Activated CD8-positive, alpha-beta T cell treated with anti-CD3 and anti-CD28 coated beads, Interleukin-2, amount 10 ng/mL, durations not matched to agents 7 days and 5 days (primary cell): ENCODE measurements at regions of chr3 and their contacts with region 1.

Region 1: GRCh38 chr3:143674100-143674968 is 173.9 kb downstream of the SLC9A9 start:
- DNase-seq: peak; percentile 86
- ATAC-seq: peak; percentile 87
- H3K4me3 Mint-ChIP-seq: no peak overlapping the region
- H3K27ac Mint-ChIP-seq: peak overlapping the region; percentile 14
- H3K4me1 Mint-ChIP-seq: peaks cover 6% of the 10 kb centered on the region
- H3K27me3 Mint-ChIP-seq: no peaks in the 10 kb centered on the region

Region 2: DNA sequence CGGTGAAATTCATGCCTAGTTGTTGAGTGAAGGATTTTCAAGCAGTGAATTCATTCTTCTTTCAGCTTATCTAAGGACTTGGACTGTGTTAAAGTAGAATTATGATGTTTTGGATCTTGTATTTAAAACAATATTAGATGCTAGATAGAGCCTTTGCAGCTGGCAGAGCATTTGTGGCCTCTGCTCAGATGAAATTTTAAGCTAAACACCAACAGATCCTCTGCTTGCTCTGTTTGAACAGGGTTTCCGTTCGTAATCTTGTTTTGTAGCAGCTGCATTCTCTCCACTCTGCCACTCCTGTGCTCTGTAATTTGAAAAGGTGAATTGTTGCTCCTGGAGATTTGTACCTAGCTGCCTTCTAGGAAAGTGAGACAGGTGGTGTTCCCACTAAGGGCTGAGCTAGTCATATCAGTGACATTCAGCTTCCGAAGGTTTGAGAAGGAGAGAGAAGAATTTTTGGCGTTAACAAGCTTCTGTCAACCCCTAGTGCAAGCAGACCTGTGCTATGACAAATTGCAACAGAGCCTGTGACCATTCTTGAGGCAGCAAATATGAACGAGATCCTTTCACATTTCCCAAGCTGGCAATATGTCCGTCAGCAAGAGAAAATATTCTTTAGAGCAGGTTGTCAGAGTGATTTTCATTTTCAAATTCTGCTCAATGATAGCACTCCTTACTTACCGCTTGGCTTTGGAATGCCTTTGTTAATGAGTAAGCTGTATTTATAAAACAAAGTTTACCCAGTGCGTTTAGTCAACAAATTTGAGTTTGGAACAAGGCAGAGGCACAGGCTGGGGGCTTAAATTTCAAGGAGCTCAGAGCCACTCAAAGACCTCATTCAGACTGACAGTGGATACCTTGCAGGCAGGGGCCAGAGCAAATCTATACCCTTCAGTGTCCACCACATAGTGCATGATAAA is 549.5 kb before region 1 on chr3:
- CTCF ChIA-PET with region 1: interaction called, 37 read pairs
- POLR2A ChIA-PET with region 1: no interaction called
- DNase-seq: no peak
- ATAC-seq: no peak
- H3K4me3 Mint-ChIP-seq: no peak overlapping the region
- H3K27ac Mint-ChIP-seq: no peak overlapping the region
- H3K4me1 Mint-ChIP-seq: peaks cover 29% of the 10 kb centered on the region
- H3K27me3 Mint-ChIP-seq: no peaks in the 10 kb centered on the region

Region 3: GRCh38 chr3:143617051-143617450 is 57.3 kb before region 1 on chr3:
- CTCF ChIA-PET with region 1: no interaction called
- POLR2A ChIA-PET with region 1: no interaction called
- DNase-seq: no peak
- ATAC-seq: no peak
- H3K4me3 Mint-ChIP-seq: no peak overlapping the region
- H3K27ac Mint-ChIP-seq: no peak overlapping the region
- H3K4me1 Mint-ChIP-seq: no peaks in the 10 kb centered on the region
- H3K27me3 Mint-ChIP-seq: no peaks in the 10 kb centered on the region

Region 4: DNA sequence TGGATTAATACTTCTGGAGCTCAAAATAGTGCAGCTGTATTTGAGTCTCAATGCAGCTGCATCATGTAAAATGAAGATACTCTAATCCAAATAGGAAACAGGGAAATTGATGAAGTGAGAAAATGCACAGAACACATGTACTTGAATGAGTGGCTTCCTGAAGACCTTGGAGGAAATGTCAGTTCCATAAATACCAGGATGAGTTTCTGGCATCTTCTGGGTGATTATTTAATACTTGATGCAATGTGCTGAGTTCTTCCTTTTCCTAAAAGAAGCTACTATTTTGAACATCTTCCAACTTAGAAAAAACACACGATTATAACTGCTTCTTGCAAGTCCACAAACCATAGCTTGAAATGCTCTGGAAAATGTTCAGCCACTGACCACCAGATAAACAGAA is 11.2 kb after region 1 on chr3:
- CTCF ChIA-PET with region 1: interaction called, 13 read pairs
- POLR2A ChIA-PET with region 1: no interaction called
- DNase-seq: no peak
- ATAC-seq: no peak
- H3K4me3 Mint-ChIP-seq: no peak overlapping the region
- H3K27ac Mint-ChIP-seq: no peak overlapping the region
- H3K4me1 Mint-ChIP-seq: no peaks in the 10 kb centered on the region
- H3K27me3 Mint-ChIP-seq: no peaks in the 10 kb centered on the region